Activated CD4-positive, alpha-beta T cell treated with anti-CD3 and anti-CD28 coated beads, Interleukin-2, amount 10 ng/mL, durations not matched to agents 24 days and 14 days (primary cell): ENCODE measurements at regions of chr7 and their contacts with region 1.

Region 1: GRCh38 chr7:85554236-85555178 is 367.7 kb upstream of the SEMA3D start:
- DNase-seq: peak; percentile 65
- H3K4me3 Mint-ChIP-seq: no peak overlapping the region
- H3K27ac Mint-ChIP-seq: no peak overlapping the region
- H3K4me1 Mint-ChIP-seq: no peaks in the 10 kb centered on the region
- H3K27me3 Mint-ChIP-seq: no peaks in the 10 kb centered on the region

Region 2: GRCh38 chr7:85041605-85042216 is 512.8 kb before region 1 on chr7:
- intact Hi-C with region 1: loop called (anchors 1 kb)
- DNase-seq: peak; percentile 66
- H3K4me3 Mint-ChIP-seq: no peak overlapping the region
- H3K27ac Mint-ChIP-seq: no peak overlapping the region
- H3K4me1 Mint-ChIP-seq: no peaks in the 10 kb centered on the region
- H3K27me3 Mint-ChIP-seq: no peaks in the 10 kb centered on the region